Activated T-helper 1 cell treated with anti-CD3 and anti-CD28 coated beads, Interleukin-12 subunit alpha, Interleukin-12 subunit beta, Interleukin-2, Interleukin-4 antibody, amounts not matched to agents 30 ng/mL and 10 ng/mL and 1 ng/mL, durations not matched to agents 14 hours and 24 hours and 36 hours (primary cell): ENCODE measurements at regions of chr12 and their contacts with region 1.

Region 1: GRCh38 chr12:124713436-124714082 is 146.1 kb upstream of the NCOR2 start:
- DNase-seq: peak; percentile 60
- H3K4me3 Mint-ChIP-seq: peak overlapping the region; percentile 62
- H3K27ac Mint-ChIP-seq: peak overlapping the region; percentile 93
- H3K4me1 Mint-ChIP-seq: peaks cover 24% of the 10 kb centered on the region
- H3K27me3 Mint-ChIP-seq: peaks cover 33% of the 10 kb centered on the region

Region 2: GRCh38 chr12:124466216-124467128 is 247.1 kb before region 1 on chr12:
- intact Hi-C with region 1: loop called (anchors 5 kb)
- DNase-seq: peak; percentile 81
- H3K4me3 Mint-ChIP-seq: peak overlapping the region; percentile 49
- H3K27ac Mint-ChIP-seq: peak overlapping the region; percentile 68
- H3K4me1 Mint-ChIP-seq: peaks cover 20% of the 10 kb centered on the region
- H3K27me3 Mint-ChIP-seq: no peaks in the 10 kb centered on the region

Region 3: DNA sequence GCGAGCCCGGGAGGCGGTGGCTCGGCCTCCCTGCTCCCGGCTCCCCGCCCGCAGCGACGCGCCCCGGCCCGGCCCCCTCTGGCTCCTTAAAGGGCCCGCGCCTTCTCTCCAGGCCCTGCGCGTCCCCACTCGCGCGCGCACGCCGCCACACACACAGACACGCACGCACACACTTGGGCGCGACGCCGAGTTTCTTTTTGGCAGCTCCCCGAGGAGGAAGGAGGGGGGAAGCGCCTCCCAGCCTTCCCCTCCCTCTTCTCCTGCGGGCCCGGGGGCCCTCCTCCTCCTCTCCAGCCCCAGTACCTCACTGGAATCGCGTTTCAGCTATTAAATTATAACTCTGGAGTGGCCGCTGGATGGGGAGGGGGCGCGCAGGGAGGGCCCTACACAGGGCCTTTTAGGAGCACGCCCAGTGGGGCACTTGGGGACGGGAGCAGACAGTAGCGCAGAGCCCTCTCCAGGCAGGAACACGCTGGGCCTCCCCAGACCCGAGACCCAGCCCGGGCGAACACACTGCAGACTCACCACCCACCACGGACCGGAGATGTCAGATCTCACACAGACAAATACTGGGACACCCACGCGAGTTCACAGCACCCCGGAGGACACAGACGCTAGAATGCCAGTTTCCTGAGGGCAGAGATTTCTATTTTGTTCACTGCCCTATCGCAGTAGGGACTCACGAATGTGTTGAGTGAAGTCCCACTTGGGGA is 145.7 kb before region 1 on chr12:
- intact Hi-C with region 1: loop called (anchors 1 kb)
- DNase-seq: peak; percentile 82
- H3K4me3 Mint-ChIP-seq: peak overlapping the region; percentile 85
- H3K27ac Mint-ChIP-seq: peak overlapping the region; percentile 84
- H3K4me1 Mint-ChIP-seq: peaks cover 24% of the 10 kb centered on the region
- H3K27me3 Mint-ChIP-seq: peaks cover 3% of the 10 kb centered on the region

Region 4: DNA sequence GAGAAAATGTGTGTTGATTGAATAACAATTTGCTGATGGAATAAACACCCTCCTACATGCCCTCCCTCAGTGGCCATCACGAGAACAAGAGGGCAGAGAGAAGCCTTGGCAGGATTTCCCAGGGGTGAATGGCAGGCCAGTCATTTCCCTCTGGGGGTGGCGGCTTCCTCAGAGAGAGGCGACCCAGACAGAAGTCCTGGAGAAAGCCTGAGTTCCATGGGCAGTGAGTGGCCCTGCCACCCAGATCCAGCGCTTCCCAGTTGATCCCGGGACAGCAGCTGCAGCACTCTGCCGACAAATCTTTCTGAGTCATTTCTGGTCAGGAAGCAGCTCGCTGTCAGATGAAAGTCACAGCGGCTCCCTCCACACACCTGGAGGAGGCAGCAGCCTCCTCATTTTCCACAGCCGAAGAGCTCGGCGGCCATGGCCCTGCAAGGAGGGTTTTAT is 27.2 kb after region 1 on chr12:
- intact Hi-C with region 1: loop called (anchors 2 kb)
- DNase-seq: no peak
- H3K4me3 Mint-ChIP-seq: peak overlapping the region; percentile 17
- H3K27ac Mint-ChIP-seq: no peak overlapping the region
- H3K4me1 Mint-ChIP-seq: peaks cover 16% of the 10 kb centered on the region
- H3K27me3 Mint-ChIP-seq: peaks cover 5% of the 10 kb centered on the region

Region 5: GRCh38 chr12:124917135-124917840 is 203.7 kb after region 1 on chr12:
- intact Hi-C with region 1: loop called (anchors 1 kb)
- DNase-seq: peak; percentile 92
- H3K4me3 Mint-ChIP-seq: peak overlapping the region; percentile 97
- H3K27ac Mint-ChIP-seq: peak overlapping the region; percentile 100
- H3K4me1 Mint-ChIP-seq: peaks cover 84% of the 10 kb centered on the region
- H3K27me3 Mint-ChIP-seq: no peaks in the 10 kb centered on the region